ENCODE measurements at regions of chr11 and their contacts with region 1.

Region 1: DNA sequence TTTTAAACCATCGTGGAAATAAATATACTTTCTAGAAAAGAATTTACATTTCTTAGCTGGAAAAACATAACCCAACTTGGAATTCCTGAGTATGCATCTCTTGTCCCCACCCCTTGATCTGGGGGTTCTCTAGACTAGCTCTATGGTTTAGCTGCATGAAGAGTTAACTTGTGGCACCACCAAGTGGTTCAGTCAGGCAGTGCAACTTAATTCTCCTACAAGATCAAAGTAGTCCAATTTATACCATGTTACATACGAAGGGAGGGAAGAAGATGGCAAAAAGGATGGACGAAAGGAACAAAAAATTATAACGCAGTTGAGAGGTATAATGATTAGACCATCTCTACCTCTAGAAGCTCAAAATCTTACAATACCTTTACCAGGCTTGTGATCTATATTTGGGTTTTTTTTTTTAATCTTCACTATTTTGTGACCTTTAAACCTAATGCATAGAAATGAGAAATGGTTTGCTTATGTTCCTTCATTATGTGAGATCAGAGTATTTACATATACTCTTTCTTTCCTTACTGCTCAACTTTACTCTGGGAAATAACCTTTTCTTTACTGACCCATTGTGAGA is 28.5 kb upstream of the ALKBH3 start:
- DNase-seq: peak; percentile 78
- H3K4me3 ChIP-seq: no peak overlapping the region
- H3K27ac ChIP-seq: no peak overlapping the region
- H3K4me1 ChIP-seq: no peaks in the 10 kb centered on the region
- H3K27me3 ChIP-seq: no peaks in the 10 kb centered on the region
- CTCF ChIP-seq: peak; percentile 59 to 73
- POLR2A ChIP-seq: no peak

Region 2: DNA sequence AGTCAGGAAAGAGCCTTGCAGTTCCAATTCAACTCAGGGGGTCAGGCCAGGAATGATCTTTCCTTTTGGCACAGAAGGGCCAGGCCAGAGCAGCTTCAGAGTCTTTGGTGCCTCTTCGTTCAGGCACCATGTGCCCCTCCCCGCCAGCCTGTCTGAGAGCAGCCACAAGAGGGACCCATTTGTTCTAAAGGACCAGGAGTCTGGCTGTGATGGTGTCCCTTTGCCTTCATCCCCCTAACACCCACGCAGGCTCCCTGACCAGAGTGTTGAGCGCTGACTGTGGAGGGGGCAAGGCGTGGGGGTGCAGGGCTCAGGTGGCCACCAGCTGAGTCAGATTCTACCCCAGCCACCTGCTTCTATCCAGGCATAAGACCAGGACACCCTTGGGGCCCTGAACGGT is 337.1 kb before region 1 on chr11:
- CTCF ChIA-PET with region 1: interaction called, 10 read pairs
- POLR2A ChIA-PET with region 1: no interaction called
- dilution Hi-C with region 1: no loop called
- intact Hi-C with region 1: no loop called
- DNase-seq: no peak
- H3K4me3 ChIP-seq: no peak overlapping the region
- H3K27ac ChIP-seq: no peak overlapping the region
- H3K4me1 ChIP-seq: no peaks in the 10 kb centered on the region
- H3K27me3 ChIP-seq: no peaks in the 10 kb centered on the region
- CTCF ChIP-seq: peak in 1 of 2 donors; percentile 15
- POLR2A ChIP-seq: no peak

Region 3: DNA sequence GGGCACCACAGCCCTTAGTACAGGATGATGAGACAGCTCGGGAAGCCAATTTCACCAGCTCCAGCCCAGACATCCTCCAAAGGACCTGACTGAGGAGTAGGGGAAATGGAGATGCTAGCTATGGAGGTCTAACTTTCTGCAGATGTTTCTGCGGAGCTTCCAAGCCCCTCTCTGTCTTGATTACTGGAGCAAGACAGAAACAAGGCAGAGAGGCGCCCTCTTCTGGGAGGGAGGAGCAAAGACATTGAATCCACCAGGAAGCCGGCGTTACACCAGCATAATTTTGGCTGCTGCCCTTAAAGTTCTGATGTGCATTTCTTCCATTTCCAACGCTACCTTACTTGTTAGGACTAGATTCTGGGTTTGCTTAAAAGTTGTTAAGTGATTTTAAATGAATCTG is 278.9 kb before region 1 on chr11:
- CTCF ChIA-PET with region 1: interaction called, 13 read pairs
- POLR2A ChIA-PET with region 1: no interaction called
- dilution Hi-C with region 1: no loop called
- intact Hi-C with region 1: loop called (anchors 2 kb)
- DNase-seq: no peak
- H3K4me3 ChIP-seq: no peak overlapping the region
- H3K27ac ChIP-seq: no peak overlapping the region
- H3K4me1 ChIP-seq: no peaks in the 10 kb centered on the region
- H3K27me3 ChIP-seq: peaks cover 71 to 72% of the 10 kb centered on the region in 2 experiments
- CTCF ChIP-seq: peak; percentile 57 to 59
- POLR2A ChIP-seq: no peak

Region 4: GRCh38 chr11:43680521-43681400 is 171.4 kb before region 1 on chr11 and contains the start of gene HSD17B12:
- CTCF ChIA-PET with region 1: interaction called, 7 read pairs
- POLR2A ChIA-PET with region 1: interaction called, 3 read pairs
- dilution Hi-C with region 1: no loop called
- intact Hi-C with region 1: loop called (anchors 10 kb)
- DNase-seq: peak; percentile 99
- H3K4me3 ChIP-seq: peak within 1 kb of the TSS; percentile 84 to 99 (median 91)
- H3K27ac ChIP-seq: peak within 1 kb of the TSS; percentile 83
- H3K4me1 ChIP-seq: peaks cover 29% of the 10 kb centered on the region
- H3K27me3 ChIP-seq: peaks cover 0 to 6% of the 10 kb centered on the region in 2 experiments
- CTCF ChIP-seq: no peak
- POLR2A ChIP-seq: peak; percentile 89
- total RNA-seq, gene HSD17B12: 96.5 and 96.6 TPM in 2 replicates

Region 5: DNA sequence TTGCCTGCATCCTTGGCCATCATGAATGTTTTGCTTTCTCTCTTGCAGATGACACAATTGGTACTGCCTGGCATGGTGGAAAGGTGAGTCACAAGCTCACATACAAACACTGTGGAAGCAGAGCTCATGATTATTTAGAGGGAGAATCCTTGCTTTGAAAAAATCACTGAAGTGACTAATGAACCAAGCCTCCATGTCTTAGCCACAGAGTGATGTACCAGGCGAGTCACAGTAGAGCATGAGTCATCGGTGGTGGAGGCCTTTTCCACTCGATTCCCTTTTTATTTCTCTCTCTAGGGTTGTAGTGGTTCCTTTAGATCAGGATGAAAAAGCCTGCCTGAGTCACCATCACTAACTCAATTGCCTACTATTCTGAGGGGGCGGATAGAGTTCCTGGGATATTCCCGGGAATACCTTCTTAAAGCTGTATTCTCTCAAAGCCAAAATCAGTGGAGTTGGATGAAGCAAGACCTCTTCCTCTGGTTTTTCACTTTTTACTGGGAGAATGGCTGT is 21.2 kb before region 1 on chr11:
- CTCF ChIA-PET with region 1: interaction called, 85 read pairs
- POLR2A ChIA-PET with region 1: no interaction called
- dilution Hi-C with region 1: no loop called
- intact Hi-C with region 1: no loop called
- DNase-seq: peak; percentile 93
- H3K4me3 ChIP-seq: no peak overlapping the region
- H3K27ac ChIP-seq: peak overlapping the region; percentile 51
- H3K4me1 ChIP-seq: peaks cover 15% of the 10 kb centered on the region
- H3K27me3 ChIP-seq: no peaks in the 10 kb centered on the region
- CTCF ChIP-seq: no peak
- POLR2A ChIP-seq: no peak

Region 6: GRCh38 chr11:44016131-44016530 is 164.0 kb after region 1 on chr11:
- CTCF ChIA-PET with region 1: no interaction called
- POLR2A ChIA-PET with region 1: no interaction called
- dilution Hi-C with region 1: no loop called
- intact Hi-C with region 1: no loop called
- DNase-seq: no peak
- H3K4me3 ChIP-seq: no peak overlapping the region
- H3K27ac ChIP-seq: no peak overlapping the region
- H3K4me1 ChIP-seq: no peaks in the 10 kb centered on the region
- H3K27me3 ChIP-seq: peaks cover 8 to 19% of the 10 kb centered on the region in 2 experiments
- CTCF ChIP-seq: no peak
- POLR2A ChIP-seq: no peak

Region 7: DNA sequence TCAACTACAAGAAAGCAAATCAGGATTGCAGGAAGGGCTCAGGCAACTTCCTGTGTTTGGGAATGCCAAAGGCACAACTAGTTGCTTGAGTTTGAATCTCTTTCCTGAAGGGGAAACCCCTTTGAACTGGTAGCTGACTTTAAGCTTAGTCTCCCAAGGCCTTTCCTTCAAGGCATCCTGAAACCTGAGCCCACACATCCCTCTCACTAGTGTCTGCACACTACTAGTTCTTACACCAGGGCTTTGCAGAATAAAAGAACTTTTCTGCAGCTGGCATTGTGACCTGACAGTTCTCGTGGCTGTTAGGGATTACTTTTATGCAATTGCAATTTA is 338.7 kb after region 1 on chr11:
- CTCF ChIA-PET with region 1: no interaction called
- POLR2A ChIA-PET with region 1: no interaction called
- dilution Hi-C with region 1: no loop called
- intact Hi-C with region 1: no loop called
- DNase-seq: no peak
- H3K4me3 ChIP-seq: no peak overlapping the region
- H3K27ac ChIP-seq: no peak overlapping the region
- H3K4me1 ChIP-seq: no peaks in the 10 kb centered on the region
- H3K27me3 ChIP-seq: no peaks in the 10 kb centered on the region
- CTCF ChIP-seq: no peak
- POLR2A ChIP-seq: no peak